Sciatic nerve (tissue), 2 donors: ENCODE measurements at regions of chr15 and their contacts with region 1.

Region 1: GRCh38 chr15:64285871-64286270 is 70.1 kb downstream of the CSNK1G1 start:
- DNase-seq: no peak
- ATAC-seq: no peak

Region 2: DNA sequence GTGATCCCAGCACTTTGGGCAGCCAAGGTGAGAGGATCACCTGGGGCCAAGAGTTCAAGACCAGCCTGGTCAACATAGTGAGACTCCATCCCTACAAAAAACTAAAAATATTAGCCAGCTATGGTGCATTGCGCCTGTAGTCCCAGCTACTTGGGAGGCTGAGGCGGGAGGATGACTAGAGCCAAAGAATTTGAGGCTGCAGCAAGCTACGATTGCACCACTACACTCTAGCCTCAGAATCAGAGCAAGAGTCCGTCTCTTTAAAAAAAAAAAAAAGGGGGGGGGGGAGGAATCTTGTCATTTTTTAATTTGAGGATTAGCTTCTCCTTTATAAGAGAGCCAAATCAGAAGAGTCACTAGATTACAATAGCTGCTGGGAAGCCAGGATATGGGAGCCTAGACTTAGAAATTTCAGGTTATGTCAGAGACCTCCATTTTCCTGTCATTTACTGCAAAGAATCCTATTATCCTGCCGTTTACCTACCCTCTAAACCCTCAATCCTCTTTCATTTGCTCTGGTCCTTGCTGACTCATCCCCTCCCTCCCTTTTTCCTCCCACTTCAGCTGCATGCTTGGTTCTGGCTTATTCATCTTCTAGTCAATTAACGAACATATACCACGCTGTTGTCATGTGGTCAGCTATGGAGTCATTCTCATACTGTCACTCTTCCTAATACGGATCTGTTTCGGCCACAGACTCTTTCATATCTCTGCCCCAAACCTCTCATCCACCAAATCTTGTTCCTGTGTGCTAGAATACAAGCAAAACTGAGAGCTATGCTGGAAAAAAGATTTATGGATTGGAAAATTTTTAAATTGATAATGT is 39.3 kb before region 1 on chr15:
- intact Hi-C with region 1: loop called (anchors 2 kb)
- DNase-seq: no peak
- ATAC-seq: peak; percentile 20